ENCODE measurements at regions of chr7 and their contacts with region 1.

Region 1: DNA sequence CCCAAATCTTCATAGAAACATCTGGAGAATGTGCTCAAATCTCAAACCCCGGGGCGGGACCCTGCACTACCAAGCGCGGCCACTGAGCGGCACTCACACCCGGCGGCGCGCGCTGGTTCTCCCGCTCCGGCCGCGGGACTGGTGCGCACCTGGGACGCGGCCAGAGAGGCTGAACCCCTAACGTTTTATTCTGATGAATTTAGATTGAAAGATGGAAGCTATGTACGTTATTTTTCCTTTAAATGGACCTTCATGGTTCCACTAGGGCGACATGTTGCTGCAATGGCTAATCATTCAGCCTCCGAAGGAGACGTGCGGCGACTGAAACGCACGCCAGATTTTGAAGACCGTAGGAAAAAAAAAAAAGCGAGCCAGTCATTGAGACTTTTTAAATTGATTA is 107.0 kb upstream of the INSIG1 start:
- DNase-seq: peak; percentile 88

Region 2: GRCh38 chr7:155205368-155206317 is 15.0 kb after region 1 on chr7:
- intact Hi-C with region 1: no loop called
- DNase-seq: peak; percentile 96

Region 3: GRCh38 chr7:155247479-155248365 is 57.0 kb after region 1 on chr7:
- intact Hi-C with region 1: no loop called
- DNase-seq: no peak

Region 4: GRCh38 chr7:155283565-155284194 is 93.0 kb after region 1 on chr7:
- intact Hi-C with region 1: no loop called
- DNase-seq: no peak

Region 5: DNA sequence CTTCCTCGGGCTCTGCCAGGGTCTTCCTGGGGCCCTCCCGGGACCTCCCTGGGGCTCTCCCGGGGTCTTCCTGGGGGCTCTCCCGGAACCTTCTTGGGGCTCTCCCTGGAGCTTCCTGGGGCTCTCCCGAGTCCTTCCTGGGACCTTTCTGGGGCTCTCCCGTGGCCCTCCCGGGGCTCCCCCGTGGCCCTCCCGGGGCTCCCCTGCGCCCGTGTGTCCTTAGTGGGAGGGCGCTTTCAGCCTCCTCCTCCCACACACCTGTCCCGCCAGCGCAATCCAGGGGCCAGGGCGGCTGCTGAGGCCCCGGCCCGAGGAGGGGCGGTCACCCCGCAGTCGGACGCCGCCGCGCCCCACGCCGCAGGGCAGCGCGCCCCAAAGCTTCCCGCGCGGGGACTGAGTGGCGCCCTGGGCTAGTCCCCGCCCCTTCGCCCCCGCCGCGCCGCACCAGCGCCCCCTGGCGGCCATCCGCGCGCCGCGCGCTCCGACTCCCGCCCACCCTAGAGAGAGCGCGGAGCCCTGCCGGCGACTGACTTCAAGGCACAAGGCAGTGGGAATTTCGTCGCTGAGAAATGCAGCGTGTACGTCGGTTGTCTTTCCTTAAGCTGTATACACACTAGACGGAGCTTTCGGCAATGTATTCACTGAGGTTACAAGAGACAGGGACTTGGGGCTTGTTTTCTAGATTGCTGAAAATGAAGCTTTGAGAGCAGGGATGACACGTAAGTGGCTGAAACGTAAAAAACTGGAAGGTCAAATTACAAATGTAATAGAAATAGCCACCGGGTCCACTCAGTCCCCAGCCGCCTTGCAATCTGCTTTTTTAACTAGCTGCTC is 154.1 kb after region 1 on chr7:
- intact Hi-C with region 1: loop called (anchors 2 to 5 kb)
- DNase-seq: peak; percentile 95

Measured in posterior vena cava (tissue), 2 donors.